ENCODE measurements at regions of chr12 and their contacts with region 1.

Region 1: DNA sequence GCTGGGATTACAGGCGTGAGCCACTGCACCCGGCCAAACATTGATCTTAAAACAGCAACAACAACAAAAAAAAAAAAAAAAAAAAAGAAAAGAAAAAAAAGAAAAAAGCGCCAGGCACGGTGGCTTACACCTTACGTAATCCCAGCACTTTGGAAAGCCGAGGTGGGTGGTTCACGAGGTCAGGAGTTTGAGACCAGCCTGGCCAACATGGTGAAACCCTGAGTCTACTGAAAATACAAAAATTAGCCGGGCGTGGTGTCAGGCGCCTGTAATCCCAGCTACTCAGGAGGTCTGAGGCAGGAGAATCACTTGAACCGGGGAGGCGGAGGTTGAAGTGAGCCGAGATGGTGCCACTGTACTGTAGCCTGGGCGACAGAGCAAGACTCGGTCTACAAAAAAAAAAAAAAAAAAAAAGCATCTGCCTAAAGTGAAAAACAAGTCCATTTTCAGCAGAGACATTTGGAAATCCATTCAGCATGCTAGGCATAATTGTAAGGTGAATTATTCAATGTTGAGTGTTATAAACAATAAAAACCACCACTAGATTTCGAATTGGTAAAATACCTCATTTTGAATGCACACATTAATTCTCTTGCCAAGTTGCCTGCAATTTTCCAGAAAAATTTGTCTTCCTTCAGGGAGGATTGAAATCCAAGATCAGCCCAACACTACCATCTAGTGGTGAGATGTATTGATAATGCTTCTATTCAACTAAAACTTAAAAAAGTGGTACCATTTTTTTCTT is 8.0 kb upstream of the CERS5 start:
- DNase-seq: no peak
- H3K4me3 ChIP-seq: no peak overlapping the region
- H3K27ac ChIP-seq: no peak overlapping the region
- H3K4me1 ChIP-seq: no peaks in the 10 kb centered on the region
- H3K27me3 ChIP-seq: no peaks in the 10 kb centered on the region
- CTCF ChIP-seq: peak; percentile 27 to 78 (median 71)
- POLR2A ChIP-seq: no peak

Region 2: GRCh38 chr12:50074936-50075807 is 100.0 kb before region 1 on chr12:
- intact Hi-C with region 1: loop called (anchors 2 kb)
- DNase-seq: peak; percentile 94
- H3K4me3 ChIP-seq: no peak overlapping the region
- H3K27ac ChIP-seq: no peak overlapping the region
- H3K4me1 ChIP-seq: peaks cover 3 to 17% (median 9%) of the 10 kb centered on the region in 6 donors
- H3K27me3 ChIP-seq: peaks cover 0 to 7% (median 0%) of the 10 kb centered on the region in 7 donors
- CTCF ChIP-seq: peak; percentile 90 to 98 (median 93)
- POLR2A ChIP-seq: no peak

Measured in spleen (tissue), 13 donors.